ENCODE measurements at regions of chr1 and their contacts with region 1.

Region 1: GRCh38 chr1:91569411-91570119 is 68.9 kb downstream of the CDC7 start:
- DNase-seq: peak; percentile 90
- H3K4me3 Mint-ChIP-seq: peak overlapping the region; percentile 64
- H3K27ac Mint-ChIP-seq: peak overlapping the region; percentile 98
- H3K4me1 Mint-ChIP-seq: peaks cover 16% of the 10 kb centered on the region
- H3K27me3 Mint-ChIP-seq: no peaks in the 10 kb centered on the region
- CTCF ChIP-seq: no peak

Region 2: GRCh38 chr1:91334856-91335255 is 234.7 kb before region 1 on chr1:
- CTCF ChIA-PET with region 1: no interaction called
- POLR2A ChIA-PET with region 1: no interaction called
- intact Hi-C with region 1: no loop called
- DNase-seq: no peak
- H3K4me3 Mint-ChIP-seq: no peak overlapping the region
- H3K27ac Mint-ChIP-seq: no peak overlapping the region
- H3K4me1 Mint-ChIP-seq: no peaks in the 10 kb centered on the region
- H3K27me3 Mint-ChIP-seq: peaks cover 49% of the 10 kb centered on the region
- CTCF ChIP-seq: no peak

Region 3: GRCh38 chr1:91555821-91556531 is 13.6 kb before region 1 on chr1:
- CTCF ChIA-PET with region 1: interaction called, 5 read pairs
- POLR2A ChIA-PET with region 1: interaction called, 23 read pairs
- intact Hi-C with region 1: no loop called
- DNase-seq: peak; percentile 25
- H3K4me3 Mint-ChIP-seq: no peak overlapping the region
- H3K27ac Mint-ChIP-seq: peak overlapping the region; percentile 84
- H3K4me1 Mint-ChIP-seq: peaks cover 45% of the 10 kb centered on the region
- H3K27me3 Mint-ChIP-seq: no peaks in the 10 kb centered on the region
- CTCF ChIP-seq: no peak

Region 4: GRCh38 chr1:91582431-91582921 is 12.9 kb after region 1 on chr1:
- CTCF ChIA-PET with region 1: no interaction called
- POLR2A ChIA-PET with region 1: interaction called, 20 read pairs
- intact Hi-C with region 1: no loop called
- DNase-seq: peak; percentile 37
- H3K4me3 Mint-ChIP-seq: no peak overlapping the region
- H3K27ac Mint-ChIP-seq: no peak overlapping the region
- H3K4me1 Mint-ChIP-seq: peaks cover 5% of the 10 kb centered on the region
- H3K27me3 Mint-ChIP-seq: no peaks in the 10 kb centered on the region
- CTCF ChIP-seq: no peak

Region 5: DNA sequence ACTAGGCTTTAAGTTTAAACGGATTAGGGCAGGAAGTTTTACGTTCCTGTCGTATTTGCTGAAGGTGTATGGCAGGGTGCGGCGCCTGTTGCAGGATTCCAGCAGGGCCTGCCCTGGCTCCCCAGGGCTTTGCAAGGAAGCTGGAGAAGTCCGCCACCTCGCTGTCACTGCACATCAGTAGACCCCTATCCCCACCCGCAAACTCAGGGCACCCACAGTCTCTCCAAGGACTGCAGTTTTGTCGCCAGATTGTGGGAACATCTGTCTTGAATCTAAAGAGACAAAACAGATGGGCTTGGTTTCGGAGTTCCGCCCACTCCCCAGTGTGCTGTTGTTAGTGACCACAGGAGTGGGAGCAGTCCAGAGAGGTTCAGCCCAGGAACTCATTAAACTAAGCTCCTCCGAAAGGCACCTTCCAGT is 41.9 kb after region 1 on chr1:
- CTCF ChIA-PET with region 1: interaction called, 4 read pairs
- POLR2A ChIA-PET with region 1: interaction called, 36 read pairs
- intact Hi-C with region 1: no loop called
- DNase-seq: peak; percentile 18
- H3K4me3 Mint-ChIP-seq: no peak overlapping the region
- H3K27ac Mint-ChIP-seq: peak overlapping the region; percentile 74
- H3K4me1 Mint-ChIP-seq: peaks cover 45% of the 10 kb centered on the region
- H3K27me3 Mint-ChIP-seq: no peaks in the 10 kb centered on the region
- CTCF ChIP-seq: no peak

Measured in MCF 10A (cell line).